AG04449 (cell line): ENCODE measurements at regions of chr21 and their contacts with region 1.

Region 1: GRCh38 chr21:29091032-29091431 is 17.6 kb upstream of the CCT8 start:
- DNase-seq: no peak
- H3K4me3 ChIP-seq: no peak overlapping the region
- CTCF ChIP-seq: no peak

Region 2: DNA sequence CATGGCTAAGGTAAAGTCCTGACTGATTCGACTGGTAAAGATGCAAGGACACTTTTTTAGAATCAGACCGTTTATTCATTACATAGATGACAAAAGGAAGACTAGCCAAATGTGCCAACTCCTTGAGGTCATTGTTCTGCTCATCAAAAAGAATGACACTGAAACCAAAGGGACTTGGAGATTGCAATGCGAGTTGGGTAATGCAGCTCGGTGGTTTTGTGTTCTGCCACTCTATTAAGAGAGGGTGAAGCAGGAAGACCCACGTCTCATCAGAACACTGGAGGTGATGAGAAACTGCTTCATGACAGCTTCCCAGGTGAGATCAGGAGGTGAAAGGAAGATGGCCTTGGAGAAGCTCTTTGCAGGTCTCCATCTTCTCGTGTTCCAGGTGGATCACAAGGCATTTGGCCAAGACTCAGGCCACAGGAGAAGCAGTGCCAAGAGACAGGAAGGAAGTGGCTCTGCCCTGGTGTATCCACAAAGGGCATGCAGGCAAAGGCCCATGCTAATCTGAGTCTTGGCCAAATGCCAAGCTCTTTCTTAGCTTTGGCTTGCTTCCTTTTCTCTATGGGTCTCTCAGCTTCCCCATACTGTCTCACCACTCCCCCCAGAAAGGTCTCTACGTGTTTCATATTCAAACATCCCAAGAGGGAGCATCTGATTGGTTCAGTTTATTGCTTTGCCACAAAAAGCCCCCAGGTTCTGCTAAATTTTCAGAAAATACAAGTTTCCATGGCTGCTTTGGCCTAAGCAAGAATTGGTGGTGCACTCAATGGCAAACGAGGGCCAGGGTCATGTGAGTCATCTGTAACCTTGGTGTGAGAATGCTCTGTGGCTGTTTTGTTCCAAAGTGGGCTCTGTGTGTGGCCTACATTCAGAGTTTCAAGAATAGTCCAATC is 11.9 kb before region 1 on chr21:
- CTCF ChIA-PET with region 1: interaction called, 11 read pairs
- POLR2A ChIA-PET with region 1: no interaction called
- DNase-seq: no peak
- H3K4me3 ChIP-seq: no peak overlapping the region
- CTCF ChIP-seq: no peak

Region 3: DNA sequence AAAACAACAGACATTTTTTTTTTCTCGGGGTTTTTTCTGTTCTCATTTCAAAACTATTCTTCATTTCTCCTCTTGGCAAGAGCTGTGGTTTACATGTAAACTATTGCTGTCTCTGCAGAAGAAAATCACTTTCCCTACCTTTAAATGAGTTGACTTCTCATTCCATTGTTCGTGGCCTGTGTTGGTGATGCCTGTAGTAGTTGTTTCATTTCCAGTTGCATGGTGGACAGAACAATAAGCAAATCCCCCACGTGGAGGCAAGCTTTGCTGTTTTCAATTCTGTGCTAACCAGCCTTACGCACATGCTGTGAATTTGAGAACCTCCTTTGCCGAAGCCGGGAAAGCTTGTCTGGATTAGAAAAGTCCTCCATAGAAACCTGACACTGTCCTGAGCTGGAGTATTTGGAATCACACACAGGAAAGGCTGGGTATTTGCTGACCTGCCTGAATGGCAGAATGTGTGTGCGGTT is 13.2 kb after region 1 on chr21:
- CTCF ChIA-PET with region 1: interaction called, 17 read pairs
- POLR2A ChIA-PET with region 1: no interaction called
- DNase-seq: no peak
- H3K4me3 ChIP-seq: no peak overlapping the region
- CTCF ChIP-seq: no peak

Region 4: DNA sequence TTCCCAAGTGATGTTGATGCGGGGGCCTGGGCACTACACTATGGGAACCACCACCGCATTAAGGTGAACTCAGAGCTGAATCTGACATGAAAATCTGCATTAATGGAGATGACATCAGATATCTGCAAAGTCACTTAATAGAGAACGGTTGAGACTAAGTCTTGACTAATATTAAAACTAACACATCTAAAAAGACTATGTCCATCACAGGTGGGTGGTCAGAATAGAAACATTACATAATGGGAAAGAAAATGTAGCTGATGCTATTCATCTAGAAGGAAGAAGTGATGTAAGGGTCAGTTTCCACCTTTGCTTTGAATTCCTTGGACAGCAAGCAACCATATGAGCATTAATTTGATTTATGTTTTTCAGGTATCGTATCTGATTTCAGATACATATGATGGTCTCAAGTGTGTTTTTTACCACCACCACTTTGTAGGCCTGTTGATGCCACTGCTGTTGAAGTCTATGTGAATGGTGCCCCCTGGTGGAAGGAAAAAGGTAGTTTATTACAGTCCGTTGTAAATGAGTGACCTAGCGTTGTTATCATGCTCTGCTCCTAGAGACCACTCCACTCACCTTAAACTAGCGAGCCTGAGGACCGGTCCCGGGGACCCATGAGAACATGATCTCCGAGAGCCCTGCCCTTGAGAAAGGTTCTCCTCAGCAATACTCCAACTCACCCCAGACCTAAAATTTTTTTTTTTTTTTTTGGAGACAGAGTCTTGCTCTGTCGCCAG is 281.2 kb after region 1 on chr21:
- CTCF ChIA-PET with region 1: interaction called, 138 read pairs
- POLR2A ChIA-PET with region 1: no interaction called
- DNase-seq: no peak
- H3K4me3 ChIP-seq: no peak overlapping the region
- CTCF ChIP-seq: peak; percentile 62

Region 5: DNA sequence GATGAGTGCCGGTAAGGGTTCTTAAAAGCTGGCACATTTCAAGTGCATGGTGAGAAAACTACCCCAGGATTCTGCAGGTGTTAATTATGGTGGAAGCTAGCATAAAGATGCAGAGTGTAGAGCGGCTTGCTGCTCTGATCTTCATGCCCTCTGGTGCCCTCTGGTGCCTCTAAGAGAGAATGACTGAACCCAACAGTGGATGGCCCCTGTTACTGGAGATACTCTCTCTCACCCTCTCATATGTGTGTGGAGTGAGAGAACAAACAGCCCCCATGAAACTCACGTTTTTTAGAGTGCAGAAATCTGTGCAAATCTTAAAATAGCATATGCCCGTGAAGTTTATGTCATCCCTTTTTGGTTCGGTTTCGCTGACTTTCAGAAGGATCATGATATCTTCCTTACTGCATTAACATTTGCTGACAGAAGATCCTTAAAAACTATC is 758.7 kb after region 1 on chr21:
- CTCF ChIA-PET with region 1: interaction called, 51 read pairs
- POLR2A ChIA-PET with region 1: no interaction called
- DNase-seq: peak; percentile 4
- H3K4me3 ChIP-seq: no peak overlapping the region
- CTCF ChIP-seq: peak; percentile 85